ENCODE measurements at regions of chr1 and their contacts with region 1.

Region 1: GRCh38 chr1:23772049-23772853 is 6.0 kb upstream of the PITHD1 start:
- DNase-seq: peak; percentile 92
- ATAC-seq: peak; percentile 97
- H3K4me3 Mint-ChIP-seq: no peak overlapping the region
- H3K27ac Mint-ChIP-seq: no peak overlapping the region
- H3K4me1 Mint-ChIP-seq: peaks cover 32% of the 10 kb centered on the region
- H3K27me3 Mint-ChIP-seq: no peaks in the 10 kb centered on the region

Region 2: GRCh38 chr1:23743287-23744052 is 28.8 kb before region 1 on chr1 and contains the start of gene ELOA:
- CTCF ChIA-PET with region 1: interaction called, 19 read pairs
- POLR2A ChIA-PET with region 1: interaction called, 4 read pairs
- DNase-seq: peak; percentile 85
- ATAC-seq: peak; percentile 94
- H3K4me3 Mint-ChIP-seq: peak within 1 kb of the TSS; percentile 93
- H3K27ac Mint-ChIP-seq: peak within 1 kb of the TSS; percentile 90
- H3K4me1 Mint-ChIP-seq: peaks cover 45% of the 10 kb centered on the region
- H3K27me3 Mint-ChIP-seq: no peaks in the 10 kb centered on the region
- total RNA-seq, gene ELOA: 29.2 to 31.0 TPM

Region 3: GRCh38 chr1:23800400-23801337 is 28.4 kb after region 1 on chr1 and contains the start of gene GALE:
- CTCF ChIA-PET with region 1: interaction called, 24 read pairs
- POLR2A ChIA-PET with region 1: interaction called, 4 read pairs
- DNase-seq: peak; percentile 99
- ATAC-seq: peak; percentile 89
- H3K4me3 Mint-ChIP-seq: peak within 1 kb of the TSS; percentile 97
- H3K27ac Mint-ChIP-seq: peak within 1 kb of the TSS; percentile 96
- H3K4me1 Mint-ChIP-seq: peaks cover 21% of the 10 kb centered on the region
- H3K27me3 Mint-ChIP-seq: no peaks in the 10 kb centered on the region
- total RNA-seq, gene GALE: 27.6 to 31.9 TPM

Region 4: DNA sequence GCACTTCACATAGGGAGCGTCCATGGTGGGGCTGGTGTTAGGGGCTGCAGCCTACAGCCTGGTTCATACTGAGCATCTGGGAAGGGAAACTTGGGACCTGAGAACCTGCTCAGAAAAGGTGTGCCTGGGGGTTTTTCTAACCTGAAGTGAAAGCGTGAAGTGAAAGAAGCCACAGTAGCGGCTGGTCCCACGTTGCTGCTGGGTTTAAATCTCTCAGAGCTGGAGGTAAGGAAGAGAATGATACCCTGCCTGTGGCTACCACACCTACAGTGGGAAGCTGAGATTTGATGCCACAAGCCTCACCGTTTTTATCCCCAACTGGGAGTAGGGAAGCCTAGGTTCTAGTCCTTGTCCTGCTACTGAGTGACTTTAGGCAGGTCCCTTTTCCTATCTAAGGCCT is 116.8 kb after region 1 on chr1:
- CTCF ChIA-PET with region 1: no interaction called
- POLR2A ChIA-PET with region 1: no interaction called
- DNase-seq: no peak
- ATAC-seq: no peak
- H3K4me3 Mint-ChIP-seq: no peak overlapping the region
- H3K27ac Mint-ChIP-seq: no peak overlapping the region
- H3K4me1 Mint-ChIP-seq: no peaks in the 10 kb centered on the region
- H3K27me3 Mint-ChIP-seq: peaks cover 7% of the 10 kb centered on the region

Region 5: GRCh38 chr1:23916209-23917131 is 144.2 kb after region 1 on chr1:
- CTCF ChIA-PET with region 1: interaction called, 100 read pairs
- POLR2A ChIA-PET with region 1: no interaction called
- DNase-seq: peak; percentile 84
- ATAC-seq: peak; percentile 93
- H3K4me3 Mint-ChIP-seq: no peak overlapping the region
- H3K27ac Mint-ChIP-seq: peak overlapping the region; percentile 5
- H3K4me1 Mint-ChIP-seq: peaks cover 49% of the 10 kb centered on the region
- H3K27me3 Mint-ChIP-seq: no peaks in the 10 kb centered on the region

Measured in activated CD8-positive, alpha-beta T cell treated with anti-CD3 and anti-CD28 coated beads, Interleukin-2, amount 10 ng/mL, durations not matched to agents 7 days and 5 days (primary cell).